Sciatic nerve (tissue), 2 donors: ENCODE measurements at regions of chr4 and their contacts with region 1.

Region 1: GRCh38 chr4:74098450-74098994 is 473 bp downstream of the CXCL2 start:
- DNase-seq: peak; percentile 59
- ATAC-seq: no peak

Region 2: GRCh38 chr4:74066232-74066631 is 32.3 kb before region 1 on chr4:
- intact Hi-C with region 1: loop called (anchors 1 kb)
- DNase-seq: no peak
- ATAC-seq: no peak